PC-3 (cell line): ENCODE measurements at regions of chr5 and their contacts with region 1.

Region 1: GRCh38 chr5:35926389-35927051 is 11.9 kb downstream of the CAPSL start:
- DNase-seq: peak; percentile 84
- ATAC-seq: peak; percentile 61
- H3K4me3 ChIP-seq: peak overlapping the region; percentile 57
- H3K27ac ChIP-seq: no peak overlapping the region
- H3K4me1 ChIP-seq: peaks cover 30% of the 10 kb centered on the region
- H3K27me3 ChIP-seq: peaks cover 9% of the 10 kb centered on the region
- CTCF ChIP-seq: peak; percentile 97

Region 2: DNA sequence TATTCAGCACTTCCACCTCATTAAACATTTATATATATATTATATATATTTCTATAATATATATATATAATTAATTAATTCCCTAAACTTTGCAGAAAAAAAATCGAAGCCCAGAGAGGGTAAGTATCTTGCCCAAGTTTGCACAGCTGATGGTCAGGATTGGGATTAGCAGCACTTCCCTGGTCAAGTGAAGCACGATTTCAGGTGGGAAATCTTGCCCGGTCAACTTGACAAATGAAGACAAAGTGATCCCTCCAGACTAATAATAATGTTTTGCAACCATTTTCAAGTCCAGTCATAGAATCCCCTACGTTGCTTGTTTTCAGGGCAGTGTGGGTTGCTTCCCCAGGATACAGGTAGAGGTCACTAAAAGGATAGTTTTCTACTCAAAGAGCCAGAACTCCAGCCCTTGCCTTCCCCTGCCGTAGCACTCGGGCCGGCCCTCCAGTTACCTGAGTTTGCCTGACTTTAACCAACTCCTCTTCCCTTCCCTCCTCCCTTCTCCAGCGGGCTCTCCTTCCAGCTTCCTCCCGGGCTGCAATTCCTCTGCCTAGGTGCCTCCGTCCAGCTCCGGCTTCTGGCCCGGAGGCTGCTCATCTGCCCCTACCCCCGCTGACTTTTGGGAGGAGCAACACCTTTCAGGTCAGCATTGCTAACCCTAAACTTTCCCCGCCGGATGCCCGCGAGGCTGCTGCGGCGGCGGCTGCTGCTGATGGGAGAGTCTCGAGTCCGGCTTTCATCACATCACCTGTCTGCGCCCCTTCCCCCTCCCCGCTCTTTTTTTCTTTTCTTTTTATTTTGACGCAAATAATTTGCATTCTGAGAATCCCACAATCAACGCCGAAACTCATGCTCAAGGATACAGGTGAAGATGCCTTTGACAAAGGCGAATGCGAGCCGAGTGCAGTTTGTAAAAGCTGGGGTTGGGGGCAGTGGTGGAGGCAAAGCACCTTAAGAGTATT is 697.2 kb before region 1 on chr5:
- CTCF ChIA-PET with region 1: no interaction called
- POLR2A ChIA-PET with region 1: no interaction called
- intact Hi-C with region 1: loop called (anchors 10 kb)
- DNase-seq: peak; percentile 61
- ATAC-seq: peak; percentile 40; the same call in 1 of the 2 replicates
- H3K4me3 ChIP-seq: peak overlapping the region; percentile 67
- H3K27ac ChIP-seq: no peak overlapping the region
- H3K4me1 ChIP-seq: no peaks in the 10 kb centered on the region; the same call in 1 of the 2 replicates
- H3K27me3 ChIP-seq: peaks cover 95% of the 10 kb centered on the region
- CTCF ChIP-seq: peak; percentile 48

Region 3: GRCh38 chr5:35533156-35533555 is 393.4 kb before region 1 on chr5:
- CTCF ChIA-PET with region 1: no interaction called
- POLR2A ChIA-PET with region 1: no interaction called
- intact Hi-C with region 1: loop called (anchors 5 kb)
- DNase-seq: no peak
- ATAC-seq: no peak
- H3K4me3 ChIP-seq: no peak overlapping the region
- H3K27ac ChIP-seq: no peak overlapping the region
- H3K4me1 ChIP-seq: no peaks in the 10 kb centered on the region
- H3K27me3 ChIP-seq: peaks cover 46% of the 10 kb centered on the region
- CTCF ChIP-seq: no peak

Region 4: GRCh38 chr5:35651002-35651756 is 275.3 kb before region 1 on chr5:
- CTCF ChIA-PET with region 1: interaction called, 51 read pairs
- POLR2A ChIA-PET with region 1: no interaction called
- intact Hi-C with region 1: loop called (anchors 1 kb)
- DNase-seq: peak; percentile 82
- ATAC-seq: peak; percentile 99
- H3K4me3 ChIP-seq: no peak overlapping the region
- H3K27ac ChIP-seq: no peak overlapping the region
- H3K4me1 ChIP-seq: no peaks in the 10 kb centered on the region
- H3K27me3 ChIP-seq: no peaks in the 10 kb centered on the region
- CTCF ChIP-seq: peak; percentile 88

Region 5: DNA sequence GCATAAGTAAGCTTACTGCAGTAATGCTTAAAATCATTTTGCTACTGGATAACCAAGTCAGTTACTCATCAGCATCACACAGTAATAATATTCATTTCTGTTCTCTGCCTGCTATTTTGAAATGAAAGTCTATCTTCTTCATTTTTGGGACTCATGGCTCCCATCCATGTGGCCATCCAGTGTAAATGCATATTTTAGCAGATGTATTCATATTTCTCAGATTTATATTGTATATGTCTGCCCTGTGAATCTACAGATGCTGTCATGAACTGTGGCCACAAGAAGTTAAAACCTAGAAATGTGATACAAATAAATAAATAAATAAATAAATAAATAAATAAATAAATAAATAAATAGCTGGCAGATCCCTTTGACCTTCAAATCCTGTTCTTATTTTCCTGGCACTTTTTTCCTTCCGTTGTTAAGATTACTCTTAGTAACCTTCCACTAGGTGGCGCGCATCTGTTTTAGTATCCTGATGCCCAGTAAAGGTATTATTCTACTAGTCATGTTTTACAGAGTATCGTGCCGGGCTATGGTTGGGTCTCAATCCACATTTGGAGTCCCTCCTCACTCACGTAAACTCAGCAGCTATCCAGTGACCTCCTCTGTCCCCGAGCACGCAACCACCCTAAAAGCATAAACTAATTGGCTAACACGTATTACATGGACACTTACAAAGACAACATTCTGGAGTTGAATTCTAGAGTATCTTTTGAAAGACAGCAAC is 149.0 kb before region 1 on chr5:
- CTCF ChIA-PET with region 1: interaction called, 6 read pairs
- POLR2A ChIA-PET with region 1: no interaction called
- intact Hi-C with region 1: loop called (anchors 1 kb)
- DNase-seq: peak; percentile 84
- ATAC-seq: peak; percentile 74
- H3K4me3 ChIP-seq: no peak overlapping the region
- H3K27ac ChIP-seq: no peak overlapping the region
- H3K4me1 ChIP-seq: peaks cover 20% of the 10 kb centered on the region
- H3K27me3 ChIP-seq: no peaks in the 10 kb centered on the region
- CTCF ChIP-seq: peak; percentile 70

Region 6: DNA sequence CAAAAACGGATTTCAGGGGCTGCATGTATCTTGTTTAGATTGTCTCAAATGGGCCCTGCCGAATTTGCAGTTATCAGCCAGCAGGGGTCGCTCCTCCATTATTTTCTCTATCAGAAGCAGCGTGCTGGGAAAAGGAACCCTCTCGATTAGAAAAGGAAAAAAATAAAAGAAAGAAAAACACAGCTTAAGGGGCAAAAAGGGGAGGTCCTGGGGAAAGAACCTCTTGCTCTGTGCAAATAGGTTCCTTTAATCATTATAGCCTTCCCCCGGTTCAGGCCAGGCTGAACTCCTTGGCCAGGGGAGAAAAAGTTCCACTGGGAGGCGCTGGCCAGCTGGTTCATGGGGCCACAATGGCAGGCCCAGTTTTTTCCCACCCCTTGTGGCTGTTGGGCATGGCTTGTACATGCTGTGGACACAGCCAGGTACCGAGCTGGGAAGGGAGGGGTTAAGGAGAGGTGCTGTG is 36.9 kb after region 1 on chr5:
- CTCF ChIA-PET with region 1: no interaction called
- POLR2A ChIA-PET with region 1: no interaction called
- intact Hi-C with region 1: no loop called
- DNase-seq: peak; percentile 58
- ATAC-seq: peak; percentile 48; the same call in 1 of the 2 replicates
- H3K4me3 ChIP-seq: 0 out of 2 replicates have a peak overlapping the region, but pooled peaks have one; percentile 10
- H3K27ac ChIP-seq: no peak overlapping the region
- H3K4me1 ChIP-seq: no peaks in the 10 kb centered on the region
- H3K27me3 ChIP-seq: no peaks in the 10 kb centered on the region
- CTCF ChIP-seq: peak; percentile 96